Colonic mucosa (tissue), 4 donors: ENCODE measurements at regions of chr15 and their contacts with region 1.

Region 1: GRCh38 chr15:66946578-66947164 is 118.7 kb upstream of the SMAD3 start:
- DNase-seq: peak; percentile 73
- H3K4me3 ChIP-seq: no peak overlapping the region
- H3K27ac ChIP-seq: no peak overlapping the region
- H3K4me1 ChIP-seq: no peaks in the 10 kb centered on the region
- H3K27me3 ChIP-seq: no peaks in the 10 kb centered on the region
- CTCF ChIP-seq: peak; percentile 87

Region 2: DNA sequence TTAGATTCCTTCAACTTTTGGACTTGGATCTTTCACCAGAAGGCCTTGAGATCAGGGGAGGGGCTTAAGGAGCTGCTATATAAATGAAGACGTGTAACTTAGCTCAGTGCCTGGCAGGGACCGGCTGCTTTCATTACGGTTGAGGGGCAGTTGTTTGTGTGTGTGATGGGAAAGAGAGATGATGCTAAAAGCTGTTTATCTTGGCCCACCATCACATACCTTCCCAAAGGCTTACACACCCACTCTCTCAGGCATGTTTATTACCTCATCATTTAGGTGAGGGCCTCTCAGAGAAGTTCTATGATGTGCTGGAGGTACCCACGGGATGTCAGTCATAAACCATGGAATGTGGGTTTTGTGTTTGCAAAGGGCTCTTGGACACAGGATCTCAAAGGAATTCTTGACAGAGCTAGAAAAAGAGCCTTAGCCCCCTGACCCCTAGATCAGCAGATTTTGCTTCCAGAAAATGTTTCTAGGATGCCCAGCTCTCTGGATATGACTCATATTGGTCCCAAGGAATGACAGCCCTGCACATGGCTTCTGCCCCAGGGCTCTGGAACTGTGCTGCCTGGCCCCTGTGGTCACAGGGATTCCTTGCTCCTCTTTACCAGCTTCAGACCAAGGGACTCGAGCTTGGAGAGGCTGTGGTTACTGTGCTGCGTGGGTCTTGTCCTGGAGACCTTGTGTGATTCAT is 102.8 kb after region 1 on chr15:
- intact Hi-C with region 1: loop called (anchors 10 kb)
- DNase-seq: peak; percentile 69
- H3K4me3 ChIP-seq: no peak overlapping the region
- H3K27ac ChIP-seq: peak overlapping the region; percentile 90
- H3K4me1 ChIP-seq: peaks cover 14% of the 10 kb centered on the region
- H3K27me3 ChIP-seq: no peaks in the 10 kb centered on the region
- CTCF ChIP-seq: no peak

Region 3: GRCh38 chr15:67091071-67091979 is 144.7 kb after region 1 on chr15:
- intact Hi-C with region 1: no loop called
- DNase-seq: peak; percentile 57
- H3K4me3 ChIP-seq: peak overlapping the region; percentile 3
- H3K27ac ChIP-seq: peak overlapping the region; percentile 52
- H3K4me1 ChIP-seq: peaks cover 47% of the 10 kb centered on the region
- H3K27me3 ChIP-seq: no peaks in the 10 kb centered on the region
- CTCF ChIP-seq: no peak

Region 4: DNA sequence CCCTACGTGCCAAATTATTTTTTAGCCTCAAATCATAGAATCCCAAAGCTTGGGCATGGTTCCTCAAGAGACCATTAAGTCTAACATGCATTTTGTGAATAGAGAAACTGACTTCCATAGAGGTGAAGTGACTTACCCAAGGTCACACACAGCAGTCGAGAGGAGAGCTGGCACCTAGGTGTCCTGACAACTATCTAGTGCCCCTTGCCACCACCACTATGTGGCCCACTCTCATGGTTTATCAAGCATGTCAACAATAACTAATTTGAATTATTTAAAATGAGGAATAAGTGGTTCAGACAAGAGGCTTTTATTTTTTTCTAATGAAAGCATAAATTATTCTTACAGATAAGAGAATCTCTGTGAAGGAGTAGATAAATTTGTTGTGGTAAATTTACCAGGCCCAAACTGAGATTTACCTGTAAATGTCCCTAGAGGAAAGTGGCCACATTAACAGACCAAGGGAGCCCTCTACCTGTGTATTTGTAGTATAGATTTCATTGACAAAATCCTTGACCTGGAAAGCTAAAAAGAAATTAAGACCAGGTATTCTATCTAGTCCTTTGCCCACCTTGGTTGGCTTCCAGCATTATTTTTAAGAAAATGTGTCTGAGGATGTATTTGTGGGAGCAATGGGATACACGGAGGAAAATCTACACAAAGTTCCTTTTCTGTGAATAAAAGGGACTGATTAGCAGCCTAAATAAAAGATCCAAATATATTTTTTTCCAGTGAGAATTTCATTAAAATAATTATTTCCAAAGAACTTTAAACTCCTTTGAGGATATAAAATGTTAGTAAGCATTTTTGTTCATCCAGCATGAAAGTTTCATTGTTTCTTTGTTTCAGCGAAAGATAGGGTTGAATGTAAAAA is 357.1 kb after region 1 on chr15:
- intact Hi-C with region 1: loop called (anchors 2 kb)
- DNase-seq: peak; percentile 26
- H3K4me3 ChIP-seq: no peak overlapping the region
- H3K27ac ChIP-seq: no peak overlapping the region
- H3K4me1 ChIP-seq: no peaks in the 10 kb centered on the region
- H3K27me3 ChIP-seq: no peaks in the 10 kb centered on the region
- CTCF ChIP-seq: peak; percentile 29

Region 5: GRCh38 chr15:67433495-67434099 is 486.9 kb after region 1 on chr15:
- intact Hi-C with region 1: loop called (anchors 5 kb)
- DNase-seq: peak; percentile 46
- H3K4me3 ChIP-seq: no peak overlapping the region
- H3K27ac ChIP-seq: no peak overlapping the region
- H3K4me1 ChIP-seq: no peaks in the 10 kb centered on the region
- H3K27me3 ChIP-seq: no peaks in the 10 kb centered on the region
- CTCF ChIP-seq: peak; percentile 73